Tibial artery (tissue), 4 donors: ENCODE measurements at regions of chr9 and their contacts with region 1.

Region 1: GRCh38 chr9:126704873-126705766 is 91.4 kb downstream of the LMX1B start:
- DNase-seq: peak; percentile 76 to 81
- H3K4me3 ChIP-seq: peak overlapping the region in 1 of 2 donors; percentile 26
- H3K27ac ChIP-seq: no peak overlapping the region
- H3K4me1 ChIP-seq: peaks cover 0 to 18% (median 11%) of the 10 kb centered on the region in 4 donors
- H3K27me3 ChIP-seq: peaks cover 0 to 73% of the 10 kb centered on the region in 2 donors
- CTCF ChIP-seq: peak; percentile 79 to 86

Region 2: DNA sequence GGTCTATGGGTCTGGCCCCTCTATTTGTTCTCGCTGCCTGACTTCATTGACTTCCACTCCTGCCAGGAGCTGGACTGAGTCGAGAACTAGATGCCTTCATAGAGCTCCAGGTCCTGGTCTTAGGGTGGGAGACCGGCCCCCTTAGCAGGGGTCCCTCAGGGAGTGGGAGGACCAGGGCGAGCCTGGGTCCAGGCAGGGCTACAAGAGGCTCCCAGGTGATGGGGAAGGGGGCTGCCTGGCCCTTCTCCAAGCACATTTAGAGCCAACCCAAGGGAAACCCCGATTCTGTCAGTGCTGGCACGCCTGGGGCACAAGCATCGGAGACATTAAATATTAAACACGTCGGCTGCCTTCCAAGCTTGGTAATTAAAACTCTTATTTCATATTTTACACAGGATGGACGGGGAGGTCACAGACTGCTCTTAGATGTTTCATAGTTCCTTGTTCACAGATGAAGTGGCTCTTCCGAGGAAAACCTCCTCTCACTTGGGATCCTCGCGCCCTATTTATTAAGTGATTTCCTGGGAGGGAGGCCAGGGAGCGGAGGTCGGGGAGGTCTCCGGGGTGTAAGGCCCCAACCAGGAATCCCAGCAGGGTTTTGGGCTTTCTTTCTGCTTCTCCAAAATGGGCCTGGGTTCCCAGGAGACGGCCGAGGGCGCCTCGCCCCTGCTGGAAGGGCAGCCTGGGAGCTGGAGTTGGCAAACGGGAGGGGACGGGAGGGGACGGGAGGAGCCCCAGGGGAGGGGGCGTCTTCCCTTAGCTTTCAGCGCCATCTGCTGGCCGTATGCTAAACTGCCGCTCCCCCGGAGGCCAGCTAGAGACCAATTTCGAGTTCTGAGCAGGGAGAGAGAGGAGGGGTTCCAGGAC is 76.3 kb after region 1 on chr9:
- intact Hi-C with region 1: loop called (anchors 5 kb)
- DNase-seq: peak; percentile 74 to 77
- H3K4me3 ChIP-seq: no peak overlapping the region
- H3K27ac ChIP-seq: no peak overlapping the region
- H3K4me1 ChIP-seq: peaks cover 0 to 8% (median 2%) of the 10 kb centered on the region in 4 donors
- H3K27me3 ChIP-seq: peaks cover 0 to 64% of the 10 kb centered on the region in 2 donors
- CTCF ChIP-seq: peak; percentile 75 to 85